Thyroid gland (tissue), 4 donors: ENCODE measurements at regions of chr14 and their contacts with region 1.

Region 1: GRCh38 chr14:27123162-27123561 is 525.3 kb upstream of the NOVA1 start:
- DNase-seq: no peak
- H3K4me3 ChIP-seq: no peak overlapping the region
- H3K27ac ChIP-seq: no peak overlapping the region
- H3K4me1 ChIP-seq: no peaks in the 10 kb centered on the region
- H3K27me3 ChIP-seq: no peaks in the 10 kb centered on the region
- CTCF ChIP-seq: no peak
- POLR2A ChIP-seq: no peak

Region 2: GRCh38 chr14:26939755-26940154 is 183.4 kb before region 1 on chr14:
- intact Hi-C with region 1: no loop called
- DNase-seq: no peak
- H3K4me3 ChIP-seq: no peak overlapping the region
- H3K27ac ChIP-seq: no peak overlapping the region
- H3K4me1 ChIP-seq: no peaks in the 10 kb centered on the region
- H3K27me3 ChIP-seq: no peaks in the 10 kb centered on the region
- CTCF ChIP-seq: no peak
- POLR2A ChIP-seq: no peak

Region 3: DNA sequence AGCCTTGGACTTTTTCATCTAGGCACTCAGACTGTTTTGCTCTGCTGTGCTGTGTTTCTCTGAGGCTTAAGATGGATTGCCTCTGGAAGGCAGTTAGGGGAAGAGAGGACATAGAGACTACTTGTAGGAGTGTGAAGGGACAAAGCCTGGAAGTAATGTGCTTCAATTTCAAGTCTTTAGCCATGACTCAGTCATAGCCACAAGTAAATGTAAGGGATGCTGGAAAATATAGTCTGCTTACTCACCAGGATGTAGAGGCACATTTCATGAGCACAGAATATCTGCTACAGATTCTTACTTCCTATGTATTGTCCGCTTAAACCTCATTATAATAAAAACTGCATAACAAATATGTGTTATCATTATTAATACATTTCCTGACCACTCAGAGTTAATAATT is 269.0 kb after region 1 on chr14:
- intact Hi-C with region 1: loop called (anchors 5 kb)
- DNase-seq: no peak
- H3K4me3 ChIP-seq: no peak overlapping the region
- H3K27ac ChIP-seq: no peak overlapping the region
- H3K4me1 ChIP-seq: no peaks in the 10 kb centered on the region
- H3K27me3 ChIP-seq: no peaks in the 10 kb centered on the region
- CTCF ChIP-seq: no peak
- POLR2A ChIP-seq: no peak